ENCODE measurements at regions of chr3 and their contacts with region 1.

Region 1: DNA sequence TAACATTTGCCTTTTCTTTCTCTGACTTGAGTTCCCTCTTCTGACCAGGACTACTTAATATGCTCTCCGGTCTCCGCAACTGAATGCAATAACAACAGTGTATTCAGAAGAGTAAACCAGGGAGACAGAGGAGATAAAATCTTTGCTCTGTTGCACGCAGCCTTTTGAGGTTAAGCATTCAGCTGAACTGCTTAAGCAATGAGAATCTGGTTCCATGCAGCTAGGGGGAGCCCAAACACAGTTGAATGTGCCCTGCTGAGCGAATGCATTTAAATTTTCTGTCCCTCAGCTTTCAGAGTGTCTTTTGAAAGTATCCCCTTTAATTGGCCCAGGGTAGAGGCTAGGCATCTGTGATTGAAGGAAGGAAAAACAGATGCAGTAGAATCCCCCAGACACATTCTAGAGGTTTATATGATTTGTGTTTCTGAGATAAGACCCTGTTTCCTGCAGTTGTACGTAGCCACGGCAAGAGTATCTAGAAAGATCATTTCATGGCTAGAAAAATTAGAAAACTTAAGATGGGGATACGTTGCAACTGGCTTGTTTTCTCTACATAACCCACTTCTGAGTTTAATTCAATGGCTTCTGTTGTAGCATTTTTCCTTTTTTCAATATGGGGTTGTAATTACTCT is 309.6 kb downstream of the TUSC7 start:
- DNase-seq: peak; percentile 76
- ATAC-seq: peak; percentile 94
- H3K4me3 ChIP-seq: no peak overlapping the region
- H3K27ac ChIP-seq: no peak overlapping the region
- H3K4me1 ChIP-seq: no peaks in the 10 kb centered on the region
- H3K27me3 ChIP-seq: no peaks in the 10 kb centered on the region
- CTCF ChIP-seq: peak; percentile 85
- POLR2A ChIP-seq: no peak
- RAD21 ChIP-seq: peak; percentile 92

Region 2: DNA sequence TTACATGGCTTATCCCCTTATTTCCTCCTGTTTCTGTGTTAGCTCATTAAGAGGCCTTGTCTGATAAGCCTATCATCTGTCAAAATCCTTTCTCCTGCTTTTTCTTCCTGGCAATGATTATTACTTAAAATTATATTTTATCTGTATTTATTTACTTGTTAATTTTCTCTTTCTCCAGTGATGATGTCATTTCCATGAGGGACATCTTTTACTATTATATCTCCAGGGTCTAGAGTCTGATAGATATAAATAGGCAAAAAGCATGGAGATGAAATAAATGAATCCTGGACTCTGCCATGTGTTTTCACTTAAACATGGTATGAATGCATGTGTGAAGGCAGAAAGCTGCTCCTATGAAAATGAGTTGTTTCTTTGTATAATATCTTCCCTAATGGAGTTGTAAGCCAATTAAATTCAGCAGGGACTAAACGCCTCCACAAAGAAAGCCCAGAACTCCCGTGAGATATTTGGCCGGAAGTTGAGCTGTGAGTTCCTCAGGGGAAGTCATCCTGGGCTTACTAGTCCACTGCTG is 65.6 kb after region 1 on chr3:
- CTCF ChIA-PET with region 1: no interaction called
- POLR2A ChIA-PET with region 1: no interaction called
- dilution Hi-C with region 1: no loop called
- in situ Hi-C with region 1: no loop called
- intact Hi-C with region 1: no loop called
- DNase-seq: no peak
- ATAC-seq: no peak
- H3K4me3 ChIP-seq: no peak overlapping the region
- H3K27ac ChIP-seq: no peak overlapping the region
- H3K4me1 ChIP-seq: no peaks in the 10 kb centered on the region
- H3K27me3 ChIP-seq: no peaks in the 10 kb centered on the region
- CTCF ChIP-seq: no peak
- POLR2A ChIP-seq: no peak
- RAD21 ChIP-seq: no peak

Region 3: DNA sequence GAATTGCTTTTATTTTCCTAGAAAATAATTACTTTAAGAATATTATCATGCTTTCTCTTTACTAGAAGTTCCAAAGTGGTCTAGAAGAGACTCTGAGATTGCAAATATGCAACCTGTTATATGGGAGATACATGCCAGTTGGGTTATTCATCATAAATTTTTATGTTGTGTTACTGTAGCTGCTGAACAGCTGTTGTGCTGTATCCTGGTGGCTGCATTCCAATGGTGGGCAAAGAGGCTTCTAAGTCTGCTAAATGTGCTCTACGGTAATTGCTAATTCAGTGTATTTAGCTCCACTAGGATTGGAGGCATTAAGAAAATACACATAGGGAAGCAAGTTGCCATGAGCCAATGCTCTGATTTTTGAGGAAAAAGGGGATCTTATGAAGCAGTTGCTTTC is 99.4 kb after region 1 on chr3:
- CTCF ChIA-PET with region 1: no interaction called
- POLR2A ChIA-PET with region 1: no interaction called
- dilution Hi-C with region 1: no loop called
- in situ Hi-C with region 1: no loop called
- intact Hi-C with region 1: no loop called
- DNase-seq: peak; percentile 13
- ATAC-seq: peak; percentile 17
- H3K4me3 ChIP-seq: no peak overlapping the region
- H3K27ac ChIP-seq: no peak overlapping the region
- H3K4me1 ChIP-seq: peaks cover 2% of the 10 kb centered on the region; the same call in 1 of the 2 replicates
- H3K27me3 ChIP-seq: no peaks in the 10 kb centered on the region
- CTCF ChIP-seq: no peak
- POLR2A ChIP-seq: no peak
- RAD21 ChIP-seq: no peak

Region 4: DNA sequence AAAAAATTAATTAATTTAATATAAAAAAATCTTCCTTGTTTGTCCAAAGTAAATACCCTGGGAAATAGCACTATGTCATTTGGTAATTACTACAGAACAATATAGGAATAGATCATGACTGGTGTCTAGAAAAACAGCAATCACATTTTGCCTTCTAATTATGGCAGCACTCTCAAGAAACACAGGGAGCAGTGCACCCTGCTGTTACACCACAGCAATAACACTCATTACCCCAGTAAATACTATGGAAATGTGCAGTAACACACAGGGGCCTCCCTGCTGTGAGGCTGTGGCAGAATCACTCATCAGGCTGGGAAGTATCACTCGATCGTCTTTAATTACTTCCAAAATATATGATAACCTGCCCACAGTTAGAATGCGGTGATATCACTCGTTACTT is 336.4 kb after region 1 on chr3:
- CTCF ChIA-PET with region 1: no interaction called
- POLR2A ChIA-PET with region 1: no interaction called
- dilution Hi-C with region 1: no loop called
- in situ Hi-C with region 1: no loop called
- intact Hi-C with region 1: loop called (anchors 2 kb)
- DNase-seq: peak; percentile 22
- ATAC-seq: peak; percentile 53; the same call in 1 of the 2 replicates
- H3K4me3 ChIP-seq: no peak overlapping the region
- H3K27ac ChIP-seq: no peak overlapping the region
- H3K4me1 ChIP-seq: no peaks in the 10 kb centered on the region
- H3K27me3 ChIP-seq: no peaks in the 10 kb centered on the region
- CTCF ChIP-seq: peak; percentile 44; the same call in 1 of the 2 replicates
- POLR2A ChIP-seq: no peak
- RAD21 ChIP-seq: peak; percentile 62

Region 5: DNA sequence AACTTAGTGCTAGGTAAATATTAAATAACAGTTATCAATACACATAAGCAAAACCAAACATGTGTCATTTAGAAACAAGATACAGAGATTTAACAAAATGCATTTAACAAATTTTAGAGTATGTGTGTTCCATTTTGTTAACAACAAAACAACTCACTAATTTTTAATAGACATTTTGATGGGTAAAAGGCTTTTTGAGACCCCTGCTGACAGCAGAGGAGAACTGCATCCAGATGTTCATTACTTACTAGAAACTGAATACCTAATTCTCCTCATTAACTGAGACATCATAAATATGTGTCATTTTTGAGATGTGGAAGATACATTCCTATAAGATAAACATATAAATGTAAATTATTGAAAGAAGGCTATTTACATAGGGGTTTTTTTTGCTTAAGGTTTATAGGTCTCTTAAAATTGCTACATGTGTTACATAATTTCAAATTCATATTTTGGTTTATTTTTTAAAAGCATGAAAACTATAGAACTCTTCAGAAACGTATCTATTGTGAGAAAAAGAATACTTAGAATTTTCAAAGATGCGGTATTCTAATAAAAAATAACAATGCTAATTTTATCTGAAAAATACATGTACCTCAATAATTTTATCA is 700.2 kb after region 1 on chr3:
- CTCF ChIA-PET with region 1: no interaction called
- POLR2A ChIA-PET with region 1: no interaction called
- dilution Hi-C with region 1: no loop called
- in situ Hi-C with region 1: loop called (anchors 25 kb)
- intact Hi-C with region 1: loop called (anchors 2 kb)
- DNase-seq: peak; percentile 40
- ATAC-seq: peak; percentile 62
- H3K4me3 ChIP-seq: no peak overlapping the region
- H3K27ac ChIP-seq: no peak overlapping the region
- H3K4me1 ChIP-seq: no peaks in the 10 kb centered on the region
- H3K27me3 ChIP-seq: no peaks in the 10 kb centered on the region
- CTCF ChIP-seq: peak; percentile 72
- POLR2A ChIP-seq: no peak
- RAD21 ChIP-seq: peak; percentile 75

Region 6: DNA sequence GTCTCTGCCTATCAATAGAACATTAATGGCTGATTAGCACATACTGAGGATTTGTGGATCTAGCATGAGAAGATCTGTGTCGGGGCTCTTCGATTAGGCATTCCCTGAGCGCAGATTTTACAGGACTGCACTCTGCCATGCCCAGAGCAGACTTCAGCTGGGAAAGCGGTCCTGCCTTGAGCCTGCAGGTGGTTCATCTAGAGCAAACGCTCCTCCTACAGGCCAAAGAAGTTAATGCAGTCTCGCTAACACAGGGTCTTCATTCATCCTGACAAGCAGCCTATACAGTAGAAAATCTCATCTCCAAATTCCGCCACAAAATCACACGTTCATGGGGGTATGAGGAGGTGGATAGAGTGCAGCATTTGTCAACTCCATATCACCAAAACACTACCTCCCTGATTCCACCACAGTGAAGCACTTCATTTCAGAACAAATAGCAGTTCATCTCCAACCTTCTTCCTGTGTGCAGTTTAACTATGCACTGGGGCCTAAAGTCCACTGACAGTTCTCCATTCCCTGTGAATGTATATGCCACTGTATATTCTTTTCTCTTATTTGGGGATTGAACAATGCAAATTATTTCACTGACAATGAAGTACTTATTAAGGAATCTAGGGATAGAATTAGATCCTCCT is 1609.6 kb after region 1 on chr3:
- CTCF ChIA-PET with region 1: no interaction called
- POLR2A ChIA-PET with region 1: no interaction called
- dilution Hi-C with region 1: no loop called
- in situ Hi-C with region 1: loop called (anchors 25 kb)
- intact Hi-C with region 1: loop called (anchors 2 kb)
- DNase-seq: peak; percentile 72
- ATAC-seq: peak; percentile 100
- H3K4me3 ChIP-seq: no peak overlapping the region
- H3K27ac ChIP-seq: no peak overlapping the region
- H3K4me1 ChIP-seq: no peaks in the 10 kb centered on the region
- H3K27me3 ChIP-seq: no peaks in the 10 kb centered on the region
- CTCF ChIP-seq: peak; percentile 79
- POLR2A ChIP-seq: no peak
- RAD21 ChIP-seq: peak; percentile 83

Region 7: DNA sequence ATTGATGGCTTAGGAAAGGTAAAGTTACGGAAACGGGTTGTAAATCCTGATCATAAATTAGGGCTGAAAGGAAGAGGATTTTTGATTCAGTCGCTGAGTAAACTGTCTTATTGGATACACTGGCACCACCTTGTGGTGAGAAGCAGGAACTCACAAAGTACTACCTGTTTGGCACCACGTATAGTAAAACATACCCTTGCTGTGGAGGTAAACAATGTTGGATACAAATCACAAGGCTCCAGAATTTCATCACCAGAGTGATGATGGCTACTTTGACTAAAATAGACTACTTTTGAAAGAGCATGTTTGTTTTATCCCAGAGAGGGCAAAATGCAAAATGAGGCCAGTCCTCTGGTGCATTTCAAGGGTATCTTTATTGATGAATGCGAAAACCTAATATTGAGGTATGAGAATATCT is 1798.6 kb after region 1 on chr3:
- CTCF ChIA-PET with region 1: no interaction called
- POLR2A ChIA-PET with region 1: no interaction called
- dilution Hi-C with region 1: no loop called
- in situ Hi-C with region 1: no loop called
- intact Hi-C with region 1: loop called (anchors 5 kb)
- DNase-seq: peak; percentile 57
- ATAC-seq: peak; percentile 83
- H3K4me3 ChIP-seq: no peak overlapping the region
- H3K27ac ChIP-seq: no peak overlapping the region
- H3K4me1 ChIP-seq: no peaks in the 10 kb centered on the region
- H3K27me3 ChIP-seq: peaks cover 1% of the 10 kb centered on the region; the same call in 1 of the 2 replicates
- CTCF ChIP-seq: peak; percentile 70
- POLR2A ChIP-seq: no peak
- RAD21 ChIP-seq: peak; percentile 62